Activated CD4-positive, alpha-beta memory T cell treated with anti-CD3 and anti-CD28 coated beads for 36 hours (primary cell): ENCODE measurements at regions of chr17 and their contacts with region 1.

Region 1: GRCh38 chr17:48374650-48375230 is 55.3 kb downstream of the SKAP1 start:
- DNase-seq: peak; percentile 51
- H3K4me3 Mint-ChIP-seq: no peak overlapping the region
- H3K27ac Mint-ChIP-seq: no peak overlapping the region
- H3K4me1 Mint-ChIP-seq: peaks cover 26% of the 10 kb centered on the region
- H3K27me3 Mint-ChIP-seq: no peaks in the 10 kb centered on the region

Region 2: DNA sequence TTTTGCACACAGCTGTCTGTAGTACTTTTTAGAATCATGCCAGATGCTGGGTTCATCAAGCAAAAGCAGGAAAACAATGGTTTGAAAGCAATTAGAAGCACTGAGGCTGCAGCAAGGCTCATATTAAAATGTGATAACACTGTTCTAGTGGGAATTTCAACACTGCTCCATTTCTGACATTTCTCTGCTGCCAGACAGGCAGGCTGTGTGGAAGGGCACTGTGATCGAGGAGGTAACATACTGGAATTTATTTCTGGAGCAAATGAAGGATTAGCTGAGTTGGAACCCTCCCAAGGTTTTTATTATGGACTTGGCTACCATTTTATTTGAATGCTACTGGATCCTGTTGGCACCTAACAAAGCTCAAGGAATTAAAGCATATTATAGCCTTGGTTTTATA is 11.6 kb before region 1 on chr17:
- CTCF ChIA-PET with region 1: interaction called, 5 read pairs
- POLR2A ChIA-PET with region 1: no interaction called
- intact Hi-C with region 1: loop called (anchors 1 kb)
- DNase-seq: no peak
- H3K4me3 Mint-ChIP-seq: no peak overlapping the region
- H3K27ac Mint-ChIP-seq: no peak overlapping the region
- H3K4me1 Mint-ChIP-seq: peaks cover 4% of the 10 kb centered on the region
- H3K27me3 Mint-ChIP-seq: no peaks in the 10 kb centered on the region

Region 3: DNA sequence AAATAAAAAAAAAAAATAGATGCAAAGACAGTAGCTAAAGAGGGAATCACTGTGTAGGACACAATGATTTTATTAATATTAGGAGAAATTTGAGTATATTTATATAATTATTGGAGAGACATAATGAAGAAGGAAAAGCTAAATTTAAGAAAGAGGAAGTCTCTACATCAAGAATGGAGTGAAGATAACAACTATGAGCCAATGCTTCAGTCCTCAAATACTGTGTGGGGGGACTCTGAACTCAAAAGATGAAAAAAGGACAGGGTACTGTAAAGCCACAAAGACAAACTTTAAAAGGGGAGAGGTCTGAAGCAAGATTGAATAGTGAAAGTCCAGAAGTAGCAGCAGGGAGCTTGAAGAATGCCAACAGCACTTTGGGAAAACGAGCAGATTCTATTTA is 10.6 kb after region 1 on chr17:
- CTCF ChIA-PET with region 1: interaction called, 10 read pairs
- POLR2A ChIA-PET with region 1: interaction called, 3 read pairs
- intact Hi-C with region 1: no loop called
- DNase-seq: no peak
- H3K4me3 Mint-ChIP-seq: no peak overlapping the region
- H3K27ac Mint-ChIP-seq: no peak overlapping the region
- H3K4me1 Mint-ChIP-seq: peaks cover 36% of the 10 kb centered on the region
- H3K27me3 Mint-ChIP-seq: no peaks in the 10 kb centered on the region

Region 4: GRCh38 chr17:48756830-48757251 is 382.1 kb after region 1 on chr17:
- CTCF ChIA-PET with region 1: no interaction called
- POLR2A ChIA-PET with region 1: no interaction called
- intact Hi-C with region 1: no loop called
- DNase-seq: no peak
- H3K4me3 Mint-ChIP-seq: no peak overlapping the region
- H3K27ac Mint-ChIP-seq: no peak overlapping the region
- H3K4me1 Mint-ChIP-seq: peaks cover 13% of the 10 kb centered on the region
- H3K27me3 Mint-ChIP-seq: peaks cover 76% of the 10 kb centered on the region